ENCODE measurements at regions of chr4 and their contacts with region 1.

Region 1: DNA sequence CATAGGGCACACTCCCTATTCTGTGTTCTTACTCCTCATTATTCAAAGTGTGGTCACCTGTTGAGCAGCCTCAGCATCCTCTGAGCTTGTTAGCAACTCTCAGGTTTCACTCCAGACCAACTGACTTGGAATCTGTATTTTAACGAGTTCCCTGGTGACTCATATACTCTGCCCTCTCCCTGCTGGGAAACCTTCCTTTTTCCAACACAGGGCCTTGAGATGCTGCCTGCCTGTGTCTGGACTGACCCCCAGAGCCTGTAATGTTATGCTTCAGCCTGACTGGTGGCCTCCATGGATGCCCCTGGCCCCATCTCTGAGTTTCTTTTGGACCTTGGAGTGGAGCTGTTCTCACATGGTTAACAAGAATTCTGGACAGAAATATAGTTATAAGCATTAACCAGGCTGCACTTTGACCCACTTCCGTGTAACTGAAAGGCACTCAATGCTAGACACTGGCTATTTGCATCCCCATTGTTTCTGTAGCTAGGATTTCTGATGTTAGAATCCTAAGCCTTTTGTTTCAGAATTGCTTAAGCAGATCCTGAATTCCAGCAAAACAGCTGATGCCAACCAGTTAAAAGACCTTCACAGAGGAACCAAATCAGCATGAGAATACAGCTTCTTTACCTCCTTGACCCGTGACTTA is 262.6 kb downstream of the STIM2 start:
- DNase-seq: no peak
- ATAC-seq: no peak; the same call in 1 of the 2 replicates
- H3K4me3 ChIP-seq: no peak overlapping the region
- H3K27ac ChIP-seq: no peak overlapping the region
- H3K4me1 ChIP-seq: no peaks in the 10 kb centered on the region
- H3K27me3 ChIP-seq: no peaks in the 10 kb centered on the region
- CTCF ChIP-seq: no peak

Region 2: DNA sequence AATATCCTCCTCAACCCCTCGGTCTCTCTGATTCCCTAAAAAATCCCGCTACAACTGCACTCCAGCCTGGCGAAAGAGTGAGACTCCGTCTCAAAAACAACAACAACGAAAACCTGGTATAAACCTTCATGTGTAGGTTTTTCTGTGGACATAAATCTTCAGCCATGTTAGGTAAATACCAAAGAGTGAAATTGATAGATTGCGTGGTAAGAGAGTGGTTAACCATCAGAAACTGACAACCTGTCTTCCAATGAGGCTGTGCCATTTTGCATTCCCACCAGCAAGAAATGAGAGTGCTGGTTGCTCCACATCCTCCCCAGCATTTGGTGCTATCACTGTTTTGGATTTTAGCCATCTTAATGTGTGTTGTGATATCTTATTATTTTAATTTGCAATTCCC is 528.5 kb before region 1 on chr4:
- CTCF ChIA-PET with region 1: no interaction called
- POLR2A ChIA-PET with region 1: no interaction called
- in situ Hi-C with region 1: no loop called
- intact Hi-C with region 1: no loop called
- DNase-seq: no peak
- ATAC-seq: no peak
- H3K4me3 ChIP-seq: no peak overlapping the region
- H3K27ac ChIP-seq: no peak overlapping the region
- H3K4me1 ChIP-seq: no peaks in the 10 kb centered on the region
- H3K27me3 ChIP-seq: no peaks in the 10 kb centered on the region
- CTCF ChIP-seq: no peak

Region 3: GRCh38 chr4:26916195-26916594 is 207.1 kb before region 1 on chr4:
- CTCF ChIA-PET with region 1: no interaction called
- POLR2A ChIA-PET with region 1: no interaction called
- in situ Hi-C with region 1: no loop called
- intact Hi-C with region 1: no loop called
- DNase-seq: no peak
- ATAC-seq: no peak
- H3K4me3 ChIP-seq: no peak overlapping the region
- H3K27ac ChIP-seq: no peak overlapping the region
- H3K4me1 ChIP-seq: no peaks in the 10 kb centered on the region
- H3K27me3 ChIP-seq: no peaks in the 10 kb centered on the region
- CTCF ChIP-seq: no peak

Region 4: GRCh38 chr4:27692158-27692557 is 568.9 kb after region 1 on chr4:
- CTCF ChIA-PET with region 1: interaction called, 10 read pairs
- POLR2A ChIA-PET with region 1: no interaction called
- in situ Hi-C with region 1: no loop called
- intact Hi-C with region 1: no loop called
- DNase-seq: peak; percentile 7
- ATAC-seq: no peak
- H3K4me3 ChIP-seq: no peak overlapping the region
- H3K27ac ChIP-seq: no peak overlapping the region
- H3K4me1 ChIP-seq: no peaks in the 10 kb centered on the region
- H3K27me3 ChIP-seq: no peaks in the 10 kb centered on the region
- CTCF ChIP-seq: peak; percentile 46

Region 5: DNA sequence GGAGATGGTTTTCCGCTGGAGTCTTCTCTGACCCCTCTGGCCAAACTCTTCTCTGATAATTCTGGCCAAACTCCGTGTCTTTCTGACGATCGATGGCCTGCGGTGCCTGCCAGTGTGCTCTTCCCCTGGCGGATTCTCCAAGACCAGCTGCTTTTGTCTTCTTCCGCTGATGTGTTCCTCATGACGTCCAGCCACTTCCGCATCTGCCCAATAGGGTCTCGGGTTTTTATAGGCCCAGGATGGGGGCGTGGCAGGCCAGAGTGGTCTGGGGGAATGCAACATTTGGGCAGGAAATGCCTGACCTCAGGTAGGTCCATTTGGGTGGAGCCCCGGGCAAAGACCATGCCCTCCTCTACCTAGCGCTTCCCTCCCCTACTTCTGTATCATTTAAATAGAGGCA is 1279.5 kb after region 1 on chr4:
- CTCF ChIA-PET with region 1: no interaction called
- POLR2A ChIA-PET with region 1: no interaction called
- in situ Hi-C with region 1: no loop called
- intact Hi-C with region 1: no loop called
- DNase-seq: no peak
- ATAC-seq: no peak
- H3K4me3 ChIP-seq: no peak overlapping the region
- H3K27ac ChIP-seq: no peak overlapping the region
- H3K4me1 ChIP-seq: no peaks in the 10 kb centered on the region
- H3K27me3 ChIP-seq: no peaks in the 10 kb centered on the region
- CTCF ChIP-seq: no peak

Measured in Panc1 (cell line).